A549 (cell line): ENCODE measurements at regions of chrX and their contacts with region 1.

Region 1: GRCh38 chrX:107025545-107025944 is 25.5 kb upstream of the MORC4 start:
- DNase-seq: peak; percentile 25 to 38
- ATAC-seq: peak; percentile 73 to 81; a peak in 5 of 6 replicates
- H3K4me3 ChIP-seq: no peak overlapping the region
- H3K27ac ChIP-seq: peak overlapping the region in 1 of 2 experiments; percentile 25; a peak in 1 of 6 replicates
- H3K4me1 ChIP-seq: no peaks in the 10 kb centered on the region
- CTCF ChIP-seq: peak; percentile 81
- EP300 ChIP-seq: no peak
- POLR2A ChIP-seq: no peak
- RAD21 ChIP-seq: peak; percentile 86 to 89

Region 2: DNA sequence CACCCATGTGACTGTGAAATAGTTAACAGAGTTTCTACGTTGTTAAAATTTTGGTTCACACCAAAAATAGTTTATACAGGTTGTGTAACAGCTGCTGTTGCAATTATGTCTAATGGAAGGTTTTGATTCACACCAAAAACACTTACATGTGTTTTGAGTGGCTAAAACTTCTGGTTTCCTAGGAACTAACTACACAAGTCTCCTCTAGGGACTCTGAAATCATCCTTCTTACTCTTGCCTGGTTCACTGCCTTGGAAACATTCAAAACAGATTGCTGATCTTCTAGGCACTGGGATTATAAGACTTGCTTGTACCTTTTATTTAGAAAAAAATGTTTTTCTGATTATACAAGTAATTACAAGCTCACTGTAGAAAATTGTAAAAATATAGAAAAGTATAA is 10.6 kb before region 1 on chrX:
- CTCF ChIA-PET with region 1: interaction called, 11 read pairs
- POLR2A ChIA-PET with region 1: no interaction called
- DNase-seq: no peak
- ATAC-seq: no peak
- H3K4me3 ChIP-seq: no peak overlapping the region
- H3K27ac ChIP-seq: no peak overlapping the region
- H3K4me1 ChIP-seq: no peaks in the 10 kb centered on the region
- CTCF ChIP-seq: no peak
- EP300 ChIP-seq: no peak
- POLR2A ChIP-seq: no peak
- RAD21 ChIP-seq: no peak

Region 3: GRCh38 chrX:107107459-107107858 is 81.9 kb after region 1 on chrX:
- CTCF ChIA-PET with region 1: no interaction called
- POLR2A ChIA-PET with region 1: no interaction called
- DNase-seq: no peak
- ATAC-seq: no peak
- H3K4me3 ChIP-seq: no peak overlapping the region
- H3K27ac ChIP-seq: no peak overlapping the region
- H3K4me1 ChIP-seq: no peaks in the 10 kb centered on the region
- CTCF ChIP-seq: no peak
- EP300 ChIP-seq: no peak
- POLR2A ChIP-seq: no peak
- RAD21 ChIP-seq: no peak

Region 4: DNA sequence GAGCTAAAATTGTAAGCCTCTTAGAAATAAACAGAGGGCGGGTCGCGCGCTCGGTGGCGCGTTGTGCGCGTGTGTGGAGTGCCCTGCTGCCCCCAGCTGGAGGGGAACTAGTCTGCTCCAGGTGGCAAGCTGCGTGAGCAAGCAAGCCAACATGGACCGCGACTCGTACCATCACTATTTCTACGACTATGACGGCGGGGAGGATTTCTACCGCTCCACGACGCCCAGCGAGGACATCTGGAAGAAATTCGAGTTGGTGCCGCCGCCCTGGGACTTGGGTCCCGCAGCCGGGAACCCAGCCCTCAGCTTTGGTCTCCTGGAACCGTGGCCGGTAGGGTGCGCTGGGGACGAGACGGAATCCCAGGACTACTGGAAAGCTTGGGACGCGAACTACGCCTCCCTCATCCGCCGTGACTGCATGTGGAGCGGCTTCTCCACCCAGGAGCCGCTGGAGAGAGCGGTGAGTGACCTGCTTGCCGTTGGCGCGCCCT is 246.9 kb after region 1 on chrX:
- CTCF ChIA-PET with region 1: interaction called, 18 read pairs
- POLR2A ChIA-PET with region 1: no interaction called
- DNase-seq: peak; percentile 50 to 64
- ATAC-seq: peak; percentile 98 to 99
- H3K4me3 ChIP-seq: peak overlapping the region; percentile 50
- H3K27ac ChIP-seq: peak overlapping the region; percentile 68 to 86
- H3K4me1 ChIP-seq: 0 out of 3 replicates have a peak, but pooled peaks cover 3% of the 10 kb centered on the region
- CTCF ChIP-seq: peak; percentile 72
- EP300 ChIP-seq: no peak
- POLR2A ChIP-seq: no peak
- RAD21 ChIP-seq: peak; percentile 32 to 73

Region 5: GRCh38 chrX:107324499-107325320 is 299.2 kb after region 1 on chrX:
- CTCF ChIA-PET with region 1: interaction called, 14 read pairs
- POLR2A ChIA-PET with region 1: no interaction called
- DNase-seq: peak; percentile 8 to 41
- ATAC-seq: peak; percentile 77 to 92
- H3K4me3 ChIP-seq: no peak overlapping the region
- H3K27ac ChIP-seq: no peak overlapping the region
- H3K4me1 ChIP-seq: no peaks in the 10 kb centered on the region
- CTCF ChIP-seq: peak; percentile 47
- EP300 ChIP-seq: no peak
- POLR2A ChIP-seq: no peak
- RAD21 ChIP-seq: peak; percentile 55 to 58; a peak in 4 of 5 replicates

Region 6: DNA sequence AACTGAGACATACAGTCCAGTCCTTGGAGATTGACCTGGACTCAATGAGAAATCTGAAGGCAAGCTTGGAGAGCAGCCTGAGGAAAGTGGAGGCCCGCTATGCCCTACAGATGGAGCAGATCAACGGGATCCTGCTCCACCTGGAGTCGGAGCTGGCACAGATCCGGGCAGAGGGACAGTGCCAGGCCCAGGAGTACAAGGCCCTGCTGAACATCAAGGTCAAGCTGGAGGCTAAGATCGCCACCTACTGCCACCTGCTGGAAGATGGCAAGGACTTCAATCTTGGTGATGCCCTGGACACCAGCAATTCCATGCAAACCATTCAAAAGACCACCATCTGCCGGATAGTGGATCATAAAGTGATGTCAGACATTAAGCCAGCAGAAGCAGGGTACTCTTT is 403.5 kb after region 1 on chrX:
- CTCF ChIA-PET with region 1: interaction called, 13 read pairs
- POLR2A ChIA-PET with region 1: no interaction called
- DNase-seq: peak in 1 of 2 experiments; percentile 61
- ATAC-seq: no peak
- H3K4me3 ChIP-seq: no peak overlapping the region
- H3K27ac ChIP-seq: no peak overlapping the region
- H3K4me1 ChIP-seq: no peaks in the 10 kb centered on the region
- CTCF ChIP-seq: peak; percentile 28; the same call in 1 of the 3 replicates
- EP300 ChIP-seq: no peak
- POLR2A ChIP-seq: no peak
- RAD21 ChIP-seq: peak; percentile 37 to 52; a peak in 3 of 5 replicates